Mammary epithelial cell (primary cell): ENCODE measurements at regions of chr13 and their contacts with region 1.

Region 1: GRCh38 chr13:97280478-97280877 is 58.3 kb downstream of the MBNL2 start:
- DNase-seq: no peak
- H3K4me3 ChIP-seq: no peak overlapping the region
- H3K27ac ChIP-seq: peak overlapping the region; percentile 93
- H3K4me1 ChIP-seq: peaks cover 76% of the 10 kb centered on the region
- H3K27me3 ChIP-seq: no peaks in the 10 kb centered on the region
- CTCF ChIP-seq: no peak

Region 2: GRCh38 chr13:97295283-97296182 is 15.1 kb after region 1 on chr13:
- CTCF ChIA-PET with region 1: interaction called, 6 read pairs
- dilution Hi-C with region 1: no loop called
- in situ Hi-C with region 1: no loop called
- intact Hi-C with region 1: loop called (anchors 2 kb)
- DNase-seq: peak; percentile 88
- H3K4me3 ChIP-seq: peak overlapping the region in 1 of 3 experiments; percentile 14
- H3K27ac ChIP-seq: peak overlapping the region; percentile 99
- H3K4me1 ChIP-seq: peaks cover 45% of the 10 kb centered on the region
- H3K27me3 ChIP-seq: no peaks in the 10 kb centered on the region
- CTCF ChIP-seq: no peak